Naive thymus-derived CD4-positive, alpha-beta T cell (primary cell): ENCODE measurements at regions of chr15 and their contacts with region 1.

Region 1: GRCh38 chr15:64893481-64894394 is 18.0 kb upstream of the ANKDD1A start:
- DNase-seq: peak; percentile 78 to 97 (median 94)
- ATAC-seq: peak; percentile 82
- H3K4me3 ChIP-seq: peak overlapping the region; percentile 74
- H3K4me3 Mint-ChIP-seq: peak overlapping the region; percentile 77 to 94 (median 90)
- H3K27ac ChIP-seq: peak overlapping the region; percentile 84
- H3K27ac Mint-ChIP-seq: peak overlapping the region; percentile 90 to 100 (median 98)
- H3K4me1 ChIP-seq: peaks cover 52 to 53% of the 10 kb centered on the region in 2 donors
- H3K4me1 Mint-ChIP-seq: peaks cover 41 to 76% (median 63%) of the 10 kb centered on the region in 7 donors
- H3K27me3 ChIP-seq: no peaks in the 10 kb centered on the region
- H3K27me3 Mint-ChIP-seq: no peaks in the 10 kb centered on the region

Region 2: GRCh38 chr15:63504247-63504978 is 1389.3 kb before region 1 on chr15 and contains the start of gene USP3:
- CTCF ChIA-PET with region 1: no interaction called
- POLR2A ChIA-PET with region 1: no interaction called
- intact Hi-C with region 1: loop called in 1 of 2 experiments (anchors 5 kb)
- DNase-seq: peak; percentile 88 to 95 (median 94)
- ATAC-seq: peak; percentile 86
- H3K4me3 ChIP-seq: peak within 1 kb of the TSS; percentile 95
- H3K4me3 Mint-ChIP-seq: peak within 1 kb of the TSS; percentile 93 to 99 (median 98)
- H3K27ac ChIP-seq: peak within 1 kb of the TSS; percentile 97
- H3K27ac Mint-ChIP-seq: peak within 1 kb of the TSS; percentile 94 to 99 (median 97)
- H3K4me1 ChIP-seq: peaks cover 65 to 70% of the 10 kb centered on the region in 2 donors
- H3K4me1 Mint-ChIP-seq: peaks cover 30 to 75% (median 72%) of the 10 kb centered on the region in 7 donors
- H3K27me3 ChIP-seq: no peaks in the 10 kb centered on the region
- H3K27me3 Mint-ChIP-seq: no peaks in the 10 kb centered on the region
- total RNA-seq, gene USP3: 64.2 to 288 (median 155) TPM

Region 3: GRCh38 chr15:64387562-64388168 is 506.1 kb before region 1 on chr15 and contains the start of gene TRIP4:
- CTCF ChIA-PET with region 1: interaction called, 5 read pairs
- POLR2A ChIA-PET with region 1: interaction called, 13 read pairs
- intact Hi-C with region 1: loop called in 1 of 2 experiments (anchors 1 kb)
- DNase-seq: peak; percentile 90 to 97 (median 96)
- ATAC-seq: peak; percentile 100
- H3K4me3 ChIP-seq: peak within 1 kb of the TSS; percentile 97
- H3K4me3 Mint-ChIP-seq: peak within 1 kb of the TSS; percentile 95 to 99 (median 97)
- H3K27ac ChIP-seq: peak within 1 kb of the TSS; percentile 64
- H3K27ac Mint-ChIP-seq: peak within 1 kb of the TSS; percentile 84 to 99 (median 92)
- H3K4me1 ChIP-seq: peaks cover 8 to 10% of the 10 kb centered on the region in 2 donors
- H3K4me1 Mint-ChIP-seq: peaks cover 17 to 24% (median 19%) of the 10 kb centered on the region in 7 donors
- H3K27me3 ChIP-seq: no peaks in the 10 kb centered on the region
- H3K27me3 Mint-ChIP-seq: no peaks in the 10 kb centered on the region
- total RNA-seq, gene TRIP4: 16.5 to 29.3 (median 25.4) TPM

Region 4: GRCh38 chr15:64809649-64810496 is 83.9 kb before region 1 on chr15:
- CTCF ChIA-PET with region 1: interaction called, 6 read pairs
- POLR2A ChIA-PET with region 1: no interaction called
- intact Hi-C with region 1: loop called in 1 of 2 experiments (anchors 1 kb)
- DNase-seq: peak; percentile 21 to 75 (median 47)
- ATAC-seq: peak; percentile 80
- H3K4me3 ChIP-seq: no peak overlapping the region
- H3K4me3 Mint-ChIP-seq: no peak overlapping the region
- H3K27ac ChIP-seq: no peak overlapping the region
- H3K27ac Mint-ChIP-seq: no peak overlapping the region
- H3K4me1 ChIP-seq: peaks cover 0 to 3% of the 10 kb centered on the region in 2 donors
- H3K4me1 Mint-ChIP-seq: peaks cover 0 to 8% (median 4%) of the 10 kb centered on the region in 7 donors
- H3K27me3 ChIP-seq: no peaks in the 10 kb centered on the region
- H3K27me3 Mint-ChIP-seq: peaks cover 0 to 12% (median 0%) of the 10 kb centered on the region in 5 donors

Region 5: GRCh38 chr15:64841258-64842095 is 52.3 kb before region 1 on chr15 and contains the start of gene PLEKHO2:
- CTCF ChIA-PET with region 1: interaction called, 23 read pairs
- POLR2A ChIA-PET with region 1: interaction called, 115 read pairs
- intact Hi-C with region 1: loop called (anchors 1 kb)
- DNase-seq: peak; percentile 70 to 88 (median 80)
- ATAC-seq: peak; percentile 85
- H3K4me3 ChIP-seq: peak within 1 kb of the TSS; percentile 65
- H3K4me3 Mint-ChIP-seq: peak within 1 kb of the TSS; percentile 85 to 98 (median 96)
- H3K27ac ChIP-seq: peak within 1 kb of the TSS; percentile 81
- H3K27ac Mint-ChIP-seq: peak within 1 kb of the TSS; percentile 83 to 96 (median 91)
- H3K4me1 ChIP-seq: peaks cover 48 to 62% of the 10 kb centered on the region in 2 donors
- H3K4me1 Mint-ChIP-seq: peaks cover 63 to 89% (median 86%) of the 10 kb centered on the region in 7 donors
- H3K27me3 ChIP-seq: no peaks in the 10 kb centered on the region
- H3K27me3 Mint-ChIP-seq: no peaks in the 10 kb centered on the region
- total RNA-seq, gene PLEKHO2: 8.6 to 52.3 (median 14.0) TPM

Region 6: DNA sequence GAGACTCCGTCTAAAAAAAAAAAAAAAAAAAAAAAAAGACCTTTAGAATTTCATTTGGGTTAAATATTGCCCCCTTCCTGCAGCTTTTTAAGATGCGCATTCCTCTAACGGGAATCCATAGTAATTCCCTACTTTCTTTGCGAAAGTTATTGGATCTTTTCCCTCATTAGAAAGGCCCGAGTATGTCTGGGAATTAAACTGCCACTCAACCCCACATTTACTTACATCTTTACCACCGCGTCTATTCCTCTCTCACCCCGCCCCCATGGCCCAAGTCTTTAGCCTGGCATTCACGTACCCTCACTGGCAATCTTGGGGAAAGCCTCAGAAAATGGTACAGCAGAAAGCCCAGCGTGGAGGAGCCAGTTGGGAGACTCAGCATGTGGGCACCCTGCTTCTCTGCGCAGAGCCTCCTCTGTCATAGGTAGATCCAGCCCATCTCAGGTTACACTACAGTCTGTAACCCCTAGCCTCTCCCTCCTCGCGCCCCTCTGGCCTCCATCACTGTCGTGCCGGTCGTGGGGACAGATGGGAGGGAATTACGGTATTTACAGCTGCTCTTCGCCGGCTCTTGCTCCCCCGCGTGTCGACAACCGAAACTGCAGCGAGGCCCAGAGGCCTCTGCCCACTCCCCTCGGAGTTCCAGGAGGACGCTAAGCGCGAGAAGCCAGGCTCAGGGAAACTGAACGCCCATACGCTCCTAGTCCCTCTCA is 11.5 kb after region 1 on chr15:
- CTCF ChIA-PET with region 1: interaction called, 4 read pairs
- POLR2A ChIA-PET with region 1: interaction called, 9 read pairs
- intact Hi-C with region 1: loop called (anchors 1 kb)
- DNase-seq: peak; percentile 58 to 79 (median 72)
- ATAC-seq: peak; percentile 84
- H3K4me3 ChIP-seq: peak overlapping the region; percentile 38
- H3K4me3 Mint-ChIP-seq: peak overlapping the region; percentile 22 to 84 (median 74)
- H3K27ac ChIP-seq: no peak overlapping the region
- H3K27ac Mint-ChIP-seq: peak overlapping the region in 6 of 9 donors; percentile 3 to 78 (median 44)
- H3K4me1 ChIP-seq: peaks cover 17 to 21% of the 10 kb centered on the region in 2 donors
- H3K4me1 Mint-ChIP-seq: peaks cover 23 to 44% (median 41%) of the 10 kb centered on the region in 7 donors
- H3K27me3 ChIP-seq: no peaks in the 10 kb centered on the region
- H3K27me3 Mint-ChIP-seq: peaks cover 0 to 14% (median 7%) of the 10 kb centered on the region in 5 donors

Region 7: DNA sequence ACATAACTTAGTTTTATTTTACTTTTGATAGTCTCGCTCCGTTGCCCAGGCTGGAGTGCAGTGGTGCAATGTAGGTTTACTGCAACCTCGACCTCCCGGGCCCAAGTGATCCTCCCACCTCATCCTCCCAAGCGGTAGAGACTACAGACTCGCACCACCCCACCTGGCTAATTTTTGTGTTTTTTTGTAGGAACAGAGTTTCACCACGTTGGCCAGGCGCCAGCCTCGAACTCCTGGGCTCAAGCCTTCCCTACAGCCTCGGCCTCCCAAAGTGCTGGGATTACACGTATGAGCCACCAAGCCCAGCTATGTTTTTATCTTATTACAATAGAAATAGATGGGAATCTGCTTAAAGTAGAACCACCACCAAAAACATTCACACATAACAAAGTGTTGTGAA is 405.0 kb after region 1 on chr15:
- CTCF ChIA-PET with region 1: no interaction called
- POLR2A ChIA-PET with region 1: interaction called, 4 read pairs
- intact Hi-C with region 1: loop called in 1 of 2 experiments (anchors 5 kb)
- DNase-seq: no peak
- ATAC-seq: no peak
- H3K4me3 ChIP-seq: no peak overlapping the region
- H3K4me3 Mint-ChIP-seq: peak overlapping the region; percentile 64 to 97 (median 84)
- H3K27ac ChIP-seq: peak overlapping the region; percentile 54
- H3K27ac Mint-ChIP-seq: peak overlapping the region; percentile 10 to 95 (median 78)
- H3K4me1 ChIP-seq: peaks cover 17 to 20% of the 10 kb centered on the region in 2 donors
- H3K4me1 Mint-ChIP-seq: peaks cover 12 to 42% (median 34%) of the 10 kb centered on the region in 7 donors
- H3K27me3 ChIP-seq: no peaks in the 10 kb centered on the region
- H3K27me3 Mint-ChIP-seq: peaks cover 0 to 2% (median 0%) of the 10 kb centered on the region in 5 donors